AG04449 (cell line): ENCODE measurements at regions of chr10 and their contacts with region 1.

Region 1: DNA sequence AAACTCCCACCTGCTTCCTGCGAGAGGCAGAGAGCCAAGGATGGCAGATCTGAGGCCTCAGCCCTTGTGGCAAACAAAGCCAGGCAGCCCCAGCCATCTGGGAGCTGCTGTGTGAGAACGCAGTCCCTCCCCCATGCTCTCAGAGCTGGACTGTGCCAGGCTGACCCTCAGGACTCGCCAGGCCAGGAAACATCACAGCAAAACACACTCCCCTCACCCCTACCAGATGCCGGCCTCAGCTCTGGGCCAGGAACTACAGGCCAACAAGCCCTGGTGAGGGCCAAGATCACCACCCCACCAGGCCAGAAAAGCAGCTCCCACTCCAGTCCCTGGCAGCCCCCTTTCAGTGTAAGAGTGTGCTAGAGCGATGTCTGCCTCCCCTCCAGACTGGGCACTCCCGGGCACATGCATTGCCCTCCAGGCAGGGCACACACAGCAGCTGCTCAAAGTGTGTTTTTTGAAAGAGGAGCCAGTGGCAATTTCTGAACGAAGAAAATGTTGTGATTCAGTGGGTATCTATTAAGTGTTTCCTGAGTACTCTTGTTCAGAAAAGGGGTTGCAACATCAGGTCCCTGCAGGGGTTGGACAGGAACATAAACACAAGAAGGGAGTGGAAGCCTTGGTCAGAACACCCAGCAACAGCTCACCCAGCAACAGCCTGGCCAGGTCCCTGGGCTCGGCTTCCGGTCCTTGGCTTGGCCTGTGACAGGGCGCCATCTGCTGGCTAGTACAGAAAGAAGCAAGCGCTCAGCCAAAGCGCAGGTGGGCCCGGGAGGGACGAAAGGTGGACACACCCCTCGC is 18.3 kb downstream of the LRRC20 start:
- DNase-seq: peak; percentile 95
- H3K4me3 ChIP-seq: no peak overlapping the region
- CTCF ChIP-seq: peak; percentile 95

Region 2: DNA sequence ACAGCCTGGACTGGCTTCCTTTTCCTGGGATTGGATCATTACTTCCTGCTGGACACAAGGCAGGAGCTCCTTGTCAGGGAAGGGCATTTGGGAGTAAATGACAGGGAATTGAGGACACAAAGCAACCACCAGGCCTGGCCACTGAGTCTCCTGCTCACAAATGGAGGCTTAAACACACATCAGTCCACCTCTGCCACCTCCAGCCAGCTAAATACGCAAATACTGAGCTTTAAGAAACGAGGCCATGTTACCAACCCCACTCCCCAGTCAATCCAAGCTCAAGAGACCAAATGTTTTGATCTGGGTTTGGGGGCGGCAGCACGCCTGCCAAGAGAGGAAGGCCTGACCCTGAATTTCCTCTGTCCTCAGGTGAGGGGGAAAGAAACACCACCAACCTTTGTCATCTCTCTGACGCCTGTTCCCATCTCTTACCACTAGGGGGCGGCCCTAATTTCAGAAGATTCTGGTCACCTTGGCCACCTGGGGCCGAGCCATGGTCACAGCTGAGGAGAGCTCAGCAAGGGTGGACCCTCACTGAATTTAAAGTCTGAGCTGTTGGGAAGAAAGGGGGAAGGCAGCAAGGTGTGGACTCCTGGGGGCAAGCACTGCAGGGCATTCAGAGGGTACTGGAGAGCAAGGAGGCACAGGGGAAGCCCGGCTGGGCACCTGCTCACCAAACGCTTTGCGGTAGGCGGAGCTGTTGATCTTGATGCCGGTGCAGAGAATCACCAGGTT is 248.1 kb before region 1 on chr10:
- CTCF ChIA-PET with region 1: interaction called, 48 read pairs
- POLR2A ChIA-PET with region 1: no interaction called
- DNase-seq: no peak
- H3K4me3 ChIP-seq: no peak overlapping the region
- CTCF ChIP-seq: peak; percentile 71

Region 3: GRCh38 chr10:70212879-70213278 is 151.3 kb before region 1 on chr10:
- CTCF ChIA-PET with region 1: interaction called, 533 read pairs
- POLR2A ChIA-PET with region 1: no interaction called
- DNase-seq: no peak
- H3K4me3 ChIP-seq: no peak overlapping the region
- CTCF ChIP-seq: no peak

Region 4: GRCh38 chr10:70233109-70233938 is 130.8 kb before region 1 on chr10 and contains the start of gene PPA1:
- CTCF ChIA-PET with region 1: interaction called, 533 read pairs
- POLR2A ChIA-PET with region 1: interaction called, 4 read pairs
- DNase-seq: peak; percentile 47
- H3K4me3 ChIP-seq: peak within 1 kb of the TSS; percentile 81
- CTCF ChIP-seq: peak; percentile 21

Region 5: DNA sequence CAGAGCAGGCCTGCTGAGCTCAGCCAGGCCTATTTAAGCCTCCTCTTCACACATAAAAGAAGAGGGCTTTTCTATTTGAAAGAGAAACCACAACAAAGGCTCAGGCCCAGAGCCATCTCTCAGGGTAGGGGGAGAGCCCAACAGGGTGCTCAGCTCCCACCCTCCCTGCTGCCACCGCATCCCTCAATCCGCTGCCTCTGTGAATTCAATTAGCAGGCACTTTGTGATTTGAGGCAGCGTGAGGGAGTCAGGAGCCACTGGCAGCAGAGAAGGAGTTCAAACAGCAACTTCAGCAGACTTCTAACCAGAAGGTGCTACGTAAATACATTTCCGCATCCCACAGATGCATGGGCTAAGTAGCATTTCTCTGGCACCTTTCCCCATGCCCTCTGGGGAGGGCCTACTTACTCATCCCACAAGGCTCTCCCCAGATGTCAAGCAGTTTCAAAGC is 26.9 kb before region 1 on chr10:
- CTCF ChIA-PET with region 1: interaction called, 161 read pairs
- POLR2A ChIA-PET with region 1: no interaction called
- DNase-seq: peak; percentile 26
- H3K4me3 ChIP-seq: no peak overlapping the region
- CTCF ChIP-seq: no peak

Region 6: GRCh38 chr10:70425096-70425495 is 60.9 kb after region 1 on chr10:
- CTCF ChIA-PET with region 1: no interaction called
- POLR2A ChIA-PET with region 1: no interaction called
- DNase-seq: no peak
- H3K4me3 ChIP-seq: no peak overlapping the region
- CTCF ChIP-seq: no peak